ENCODE measurements at regions of chr12 and their contacts with region 1.

Region 1: GRCh38 chr12:104207416-104208210 is 8.0 kb upstream of the TXNRD1 start:
- DNase-seq: peak in 1 of 2 donors; percentile 82
- H3K4me3 ChIP-seq: no peak overlapping the region
- H3K27ac ChIP-seq: no peak overlapping the region
- H3K4me1 ChIP-seq: no peaks in the 10 kb centered on the region
- H3K27me3 ChIP-seq: no peaks in the 10 kb centered on the region
- CTCF ChIP-seq: no peak
- POLR2A ChIP-seq: no peak

Region 2: DNA sequence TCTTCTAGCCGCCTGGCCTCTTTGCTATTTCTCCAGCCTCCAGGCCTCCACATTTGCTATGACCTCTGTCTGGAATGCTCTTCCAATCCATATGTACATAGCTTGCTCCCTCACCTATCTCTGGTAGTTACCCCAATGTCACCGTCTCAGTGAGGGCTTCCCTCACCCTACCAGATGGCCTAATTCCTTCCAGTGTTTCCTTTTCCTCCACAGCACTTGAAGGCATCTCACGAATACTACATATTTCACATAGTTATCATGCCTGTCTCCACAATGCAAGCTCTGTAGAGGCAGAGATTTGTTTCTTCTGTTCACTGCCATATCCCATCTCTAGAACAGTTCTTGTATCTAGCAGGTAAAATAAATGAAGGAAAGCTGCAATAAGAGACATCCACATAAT is 298.7 kb before region 1 on chr12:
- intact Hi-C with region 1: no loop called
- DNase-seq: no peak
- H3K4me3 ChIP-seq: no peak overlapping the region
- H3K27ac ChIP-seq: no peak overlapping the region
- H3K4me1 ChIP-seq: no peaks in the 10 kb centered on the region
- H3K27me3 ChIP-seq: no peaks in the 10 kb centered on the region
- CTCF ChIP-seq: no peak
- POLR2A ChIP-seq: no peak

Region 3: DNA sequence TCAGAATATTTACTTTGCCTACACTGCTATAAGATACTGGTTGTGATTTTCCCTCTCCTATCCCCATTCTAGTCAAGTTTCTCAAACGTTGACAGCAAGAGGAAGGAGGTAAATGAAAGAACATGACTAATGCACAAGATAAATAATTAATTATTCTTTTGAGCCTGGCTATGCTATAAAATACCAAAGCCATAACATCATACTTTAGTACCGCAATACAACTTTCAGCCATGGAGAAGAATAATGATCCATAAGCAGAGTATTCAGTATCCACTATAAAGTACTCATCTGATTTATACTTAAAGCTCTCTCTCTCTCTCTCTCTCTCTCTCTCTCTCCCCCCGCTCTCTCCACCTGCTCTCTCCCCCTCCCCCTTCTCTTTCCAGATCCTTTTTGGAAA is 200.7 kb before region 1 on chr12:
- intact Hi-C with region 1: no loop called
- DNase-seq: no peak
- H3K4me3 ChIP-seq: no peak overlapping the region
- H3K27ac ChIP-seq: no peak overlapping the region
- H3K4me1 ChIP-seq: no peaks in the 10 kb centered on the region
- H3K27me3 ChIP-seq: no peaks in the 10 kb centered on the region
- CTCF ChIP-seq: no peak
- POLR2A ChIP-seq: no peak

Region 4: GRCh38 chr12:104358347-104359003 is 150.9 kb after region 1 on chr12:
- intact Hi-C with region 1: loop called (anchors 5 kb)
- DNase-seq: no peak
- H3K4me3 ChIP-seq: no peak overlapping the region
- H3K27ac ChIP-seq: no peak overlapping the region
- H3K4me1 ChIP-seq: no peaks in the 10 kb centered on the region
- H3K27me3 ChIP-seq: no peaks in the 10 kb centered on the region
- CTCF ChIP-seq: peak; percentile 54 to 85 (median 69)
- POLR2A ChIP-seq: no peak